H1 (cell line): ENCODE measurements at regions of chr10 and their contacts with region 1.

Region 1: DNA sequence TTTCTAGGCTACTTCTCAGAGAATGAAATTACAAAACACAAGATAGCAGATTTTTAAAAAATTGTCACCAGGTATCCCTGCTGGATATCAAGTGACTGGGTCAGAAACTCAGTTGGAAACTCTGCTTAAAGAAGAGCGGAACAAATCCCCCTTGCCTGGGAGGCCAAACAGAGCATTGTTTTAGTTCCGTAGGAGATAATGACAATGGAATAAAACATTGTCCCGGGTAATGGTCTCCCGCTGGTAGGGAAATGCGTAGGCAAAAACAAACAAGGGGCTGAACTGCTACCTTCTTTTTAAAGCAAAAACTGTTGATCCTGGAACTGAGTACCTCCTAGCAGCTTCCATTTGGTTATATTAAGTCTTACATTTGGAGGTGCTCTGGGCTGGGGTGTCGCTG is 21.3 kb upstream of the VAX1 start:
- DNase-seq: peak; percentile 82 to 86
- H3K4me3 ChIP-seq: peak overlapping the region in 1 of 4 experiments; percentile 15; a peak in 1 of 8 replicates
- H3K27ac ChIP-seq: no peak overlapping the region
- H3K4me1 ChIP-seq: peaks cover 6 to 14% (median 10%) of the 10 kb centered on the region in 4 experiments; a peak in 6 of 7 replicates
- H3K27me3 ChIP-seq: peaks cover 78 to 97% (median 92%) of the 10 kb centered on the region in 4 experiments
- CTCF ChIP-seq: no peak
- EP300 ChIP-seq: peak in 1 of 2 experiments; percentile 88; a peak in 1 of 3 replicates
- POLR2A ChIP-seq: no peak
- RAD21 ChIP-seq: no peak

Region 2: GRCh38 chr10:117137031-117137910 is 22.1 kb before region 1 on chr10:
- CTCF ChIA-PET with region 1: interaction called, 212 read pairs
- POLR2A ChIA-PET with region 1: interaction called, 9 read pairs
- DNase-seq: peak in 1 of 2 experiments; percentile 74
- H3K4me3 ChIP-seq: peak overlapping the region; percentile 10 to 55 (median 30); a peak in 7 of 8 replicates
- H3K27ac ChIP-seq: no peak overlapping the region
- H3K4me1 ChIP-seq: peaks cover 3 to 32% (median 16%) of the 10 kb centered on the region in 4 experiments
- H3K27me3 ChIP-seq: peaks cover 96 to 99% (median 98%) of the 10 kb centered on the region in 4 experiments
- CTCF ChIP-seq: no peak
- EP300 ChIP-seq: no peak
- POLR2A ChIP-seq: no peak
- RAD21 ChIP-seq: no peak

Region 3: GRCh38 chr10:117143103-117143823 is 16.1 kb before region 1 on chr10:
- CTCF ChIA-PET with region 1: interaction called, 212 read pairs
- POLR2A ChIA-PET with region 1: interaction called, 7 read pairs
- DNase-seq: no peak
- H3K4me3 ChIP-seq: no peak overlapping the region
- H3K27ac ChIP-seq: no peak overlapping the region
- H3K4me1 ChIP-seq: peaks cover 2 to 6% (median 4%) of the 10 kb centered on the region in 4 experiments; a peak in 5 of 7 replicates
- H3K27me3 ChIP-seq: peaks cover 75 to 96% (median 87%) of the 10 kb centered on the region in 4 experiments
- CTCF ChIP-seq: no peak
- EP300 ChIP-seq: no peak
- POLR2A ChIP-seq: no peak
- RAD21 ChIP-seq: no peak

Region 4: GRCh38 chr10:117198088-117198487 is 38.7 kb after region 1 on chr10:
- CTCF ChIA-PET with region 1: no interaction called
- POLR2A ChIA-PET with region 1: no interaction called
- DNase-seq: no peak
- H3K4me3 ChIP-seq: no peak overlapping the region
- H3K27ac ChIP-seq: no peak overlapping the region
- H3K4me1 ChIP-seq: no peaks in the 10 kb centered on the region; a peak in 2 of 7 replicates
- H3K27me3 ChIP-seq: no peaks in the 10 kb centered on the region
- CTCF ChIP-seq: no peak
- EP300 ChIP-seq: no peak
- POLR2A ChIP-seq: no peak
- RAD21 ChIP-seq: no peak

Region 5: DNA sequence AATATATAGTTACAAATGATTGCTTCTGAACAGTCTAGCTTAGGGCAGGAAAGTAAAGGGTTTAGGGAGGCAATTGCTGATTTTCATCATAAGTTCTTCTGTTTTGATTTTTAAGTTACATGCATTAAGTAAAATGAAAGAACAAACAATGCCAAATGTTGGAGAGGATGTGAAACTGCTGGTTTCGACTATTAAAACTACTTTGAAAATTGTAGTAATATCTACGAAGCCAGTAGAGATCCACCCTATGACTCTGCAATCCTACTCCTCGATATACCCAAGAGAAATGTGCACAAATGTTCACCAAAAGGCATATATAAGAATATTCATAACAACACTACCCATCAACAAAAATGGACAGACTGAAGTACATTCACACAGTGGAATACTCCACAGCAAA is 191.5 kb after region 1 on chr10:
- CTCF ChIA-PET with region 1: no interaction called
- POLR2A ChIA-PET with region 1: no interaction called
- DNase-seq: no peak
- H3K4me3 ChIP-seq: no peak overlapping the region
- H3K27ac ChIP-seq: no peak overlapping the region
- H3K4me1 ChIP-seq: peaks cover 5 to 24% (median 15%) of the 10 kb centered on the region in 4 experiments
- H3K27me3 ChIP-seq: no peaks in the 10 kb centered on the region
- CTCF ChIP-seq: no peak
- EP300 ChIP-seq: no peak
- POLR2A ChIP-seq: no peak
- RAD21 ChIP-seq: no peak